ENCODE measurements at regions of chr19 and their contacts with region 1.

Region 1: GRCh38 chr19:58278157-58279041 is at the start of gene ZNF8:
- DNase-seq: peak; percentile 99
- ATAC-seq: peak; percentile 98
- H3K4me3 Mint-ChIP-seq: peak within 1 kb of the TSS; percentile 98
- H3K27ac Mint-ChIP-seq: peak within 1 kb of the TSS; percentile 95
- H3K4me1 Mint-ChIP-seq: peaks cover 28% of the 10 kb centered on the region
- H3K27me3 Mint-ChIP-seq: no peaks in the 10 kb centered on the region
- total RNA-seq, gene ZNF8: 4.4 to 4.5 TPM

Region 2: DNA sequence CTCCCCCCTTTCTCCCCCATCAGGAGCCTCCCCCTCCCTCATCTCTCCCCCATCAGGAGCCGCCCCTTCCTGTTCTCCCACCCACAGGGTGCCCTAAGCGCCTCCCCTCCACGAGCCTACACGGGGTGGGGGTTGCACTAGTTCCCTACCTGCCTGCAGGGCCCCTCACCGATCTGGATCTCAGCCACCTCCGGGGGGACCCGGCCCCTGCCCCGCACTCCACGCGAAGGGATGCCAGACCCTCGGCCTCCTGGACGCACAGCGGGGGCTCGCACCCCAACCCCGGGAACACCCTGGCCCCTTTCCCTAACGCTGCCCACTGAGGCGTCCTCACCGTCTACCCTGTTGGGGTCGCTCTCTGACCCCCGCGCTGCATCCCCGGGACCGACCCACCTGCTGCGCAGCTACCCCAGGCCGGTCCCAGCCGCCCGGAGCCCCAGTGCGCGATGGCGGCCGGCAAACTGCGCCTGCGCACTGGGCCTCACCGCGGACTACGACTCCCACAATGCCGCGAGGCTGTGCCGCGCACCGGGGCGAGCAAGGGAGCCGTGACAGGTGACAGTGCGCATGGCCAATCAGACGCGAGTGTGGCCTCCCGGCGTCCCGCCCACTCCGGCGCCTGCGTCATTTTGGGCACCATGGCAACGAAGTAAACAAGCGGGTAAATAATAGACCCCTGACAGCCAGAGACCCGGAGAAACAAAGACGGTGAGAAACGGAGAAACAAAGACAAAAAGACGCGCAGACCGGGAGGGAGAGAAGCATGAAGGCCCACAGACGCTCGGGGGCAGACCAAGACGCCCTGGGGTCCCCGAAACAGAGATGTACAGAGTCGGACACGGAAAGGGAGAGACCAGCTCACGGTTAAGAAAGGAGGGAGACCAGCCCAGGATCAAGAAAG is 180.4 kb before region 1 on chr19 and contains the start of gene ZSCAN18:
- CTCF ChIA-PET with region 1: no interaction called
- POLR2A ChIA-PET with region 1: no interaction called
- intact Hi-C with region 1: loop called in 1 of 2 experiments (anchors 1 kb)
- DNase-seq: peak; percentile 97
- ATAC-seq: peak; percentile 99
- H3K4me3 Mint-ChIP-seq: peak within 1 kb of the TSS; percentile 82
- H3K27ac Mint-ChIP-seq: peak within 1 kb of the TSS; percentile 97
- H3K4me1 Mint-ChIP-seq: peaks cover 13% of the 10 kb centered on the region
- H3K27me3 Mint-ChIP-seq: no peaks in the 10 kb centered on the region
- total RNA-seq, gene ZSCAN18: 23.1 to 29.2 TPM

Region 3: GRCh38 chr19:58150328-58150921 is 128.0 kb before region 1 on chr19 and contains the start of gene ZNF329:
- CTCF ChIA-PET with region 1: no interaction called
- POLR2A ChIA-PET with region 1: no interaction called
- intact Hi-C with region 1: no loop called
- DNase-seq: peak; percentile 95
- ATAC-seq: peak; percentile 74
- H3K4me3 Mint-ChIP-seq: peak within 1 kb of the TSS; percentile 81
- H3K27ac Mint-ChIP-seq: peak within 1 kb of the TSS; percentile 87
- H3K4me1 Mint-ChIP-seq: peaks cover 19% of the 10 kb centered on the region
- H3K27me3 Mint-ChIP-seq: no peaks in the 10 kb centered on the region
- total RNA-seq, gene ZNF329: 4.9 to 5.0 TPM

Region 4: DNA sequence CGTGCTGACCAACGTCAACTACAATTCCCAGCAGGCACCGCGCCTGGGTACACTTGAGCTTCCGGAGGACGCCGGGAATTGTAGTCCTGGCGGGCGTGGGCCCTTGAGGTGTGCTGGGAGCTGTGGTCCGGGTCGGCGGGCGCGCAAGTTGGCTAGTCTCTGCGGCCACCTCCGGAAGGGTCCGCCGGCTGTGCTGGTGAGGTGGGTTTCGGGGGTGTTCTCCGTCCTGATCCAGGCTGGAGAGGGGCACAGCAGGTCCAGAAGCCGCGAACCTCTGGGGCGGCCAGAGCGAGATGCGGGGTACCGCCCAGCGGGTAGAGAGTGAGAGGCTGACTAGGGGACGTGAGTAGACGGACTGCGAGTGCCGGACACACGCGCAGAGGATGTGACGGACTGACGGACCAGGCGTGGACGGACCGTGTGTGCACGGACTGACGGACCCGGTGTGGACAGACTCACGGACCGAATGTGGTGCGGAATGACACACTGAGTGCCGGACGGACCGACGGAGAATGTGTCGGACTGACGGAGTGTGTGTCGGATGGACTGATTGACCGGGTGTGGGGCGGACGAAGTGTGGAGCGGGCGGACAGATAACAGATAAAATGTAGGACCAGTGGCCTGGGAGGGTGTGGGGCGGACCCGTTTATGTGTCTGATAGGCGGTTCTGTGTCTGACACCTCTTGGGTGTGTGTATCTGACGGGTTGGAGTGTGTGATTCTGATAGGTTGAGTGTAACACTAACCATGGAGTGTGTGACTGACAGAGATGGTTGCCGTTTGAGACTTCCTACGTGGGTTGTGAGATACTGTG is 48.7 kb after region 1 on chr19 and contains the start of gene ZSCAN22:
- CTCF ChIA-PET with region 1: no interaction called
- POLR2A ChIA-PET with region 1: no interaction called
- intact Hi-C with region 1: loop called (anchors 1 to 2 kb)
- DNase-seq: peak; percentile 96
- ATAC-seq: peak; percentile 91
- H3K4me3 Mint-ChIP-seq: no peak within 1 kb of the TSS
- H3K27ac Mint-ChIP-seq: no peak within 1 kb of the TSS
- H3K4me1 Mint-ChIP-seq: peaks cover 4% of the 10 kb centered on the region
- H3K27me3 Mint-ChIP-seq: no peaks in the 10 kb centered on the region
- total RNA-seq, gene ZSCAN22: 3.1 to 3.8 TPM

Region 5: GRCh38 chr19:58400916-58401839 is 122.8 kb after region 1 on chr19:
- CTCF ChIA-PET with region 1: no interaction called
- POLR2A ChIA-PET with region 1: no interaction called
- intact Hi-C with region 1: loop called in 1 of 2 experiments (anchors 1 kb)
- DNase-seq: peak; percentile 100
- ATAC-seq: peak; percentile 97
- H3K4me3 Mint-ChIP-seq: peak overlapping the region; percentile 82
- H3K27ac Mint-ChIP-seq: peak overlapping the region; percentile 61
- H3K4me1 Mint-ChIP-seq: peaks cover 14% of the 10 kb centered on the region
- H3K27me3 Mint-ChIP-seq: peaks cover 2% of the 10 kb centered on the region

Region 6: GRCh38 chr19:58466760-58467589 is 188.6 kb after region 1 on chr19 and contains the start of gene ZNF324:
- CTCF ChIA-PET with region 1: no interaction called
- POLR2A ChIA-PET with region 1: no interaction called
- intact Hi-C with region 1: loop called in 1 of 2 experiments (anchors 1 kb)
- DNase-seq: peak; percentile 99
- ATAC-seq: peak; percentile 98
- H3K4me3 Mint-ChIP-seq: peak within 1 kb of the TSS; percentile 86
- H3K27ac Mint-ChIP-seq: peak within 1 kb of the TSS; percentile 47
- H3K4me1 Mint-ChIP-seq: peaks cover 22% of the 10 kb centered on the region
- H3K27me3 Mint-ChIP-seq: peaks cover 2% of the 10 kb centered on the region
- total RNA-seq, gene ZNF324: 4.7 to 7.5 TPM